H1 (cell line): ENCODE measurements at regions of chr16 and their contacts with region 1.

Region 1: GRCh38 chr16:24324421-24324820 is 68.3 kb downstream of the CACNG3 start:
- DNase-seq: no peak
- H3K4me3 ChIP-seq: no peak overlapping the region
- H3K27ac ChIP-seq: no peak overlapping the region
- H3K4me1 ChIP-seq: no peaks in the 10 kb centered on the region
- H3K27me3 ChIP-seq: no peaks in the 10 kb centered on the region; a peak in 1 of 7 replicates
- CTCF ChIP-seq: no peak
- EP300 ChIP-seq: no peak
- POLR2A ChIP-seq: no peak
- RAD21 ChIP-seq: no peak

Region 2: GRCh38 chr16:24297375-24297774 is 27.0 kb before region 1 on chr16:
- CTCF ChIA-PET with region 1: no interaction called
- POLR2A ChIA-PET with region 1: no interaction called
- DNase-seq: no peak
- H3K4me3 ChIP-seq: no peak overlapping the region
- H3K27ac ChIP-seq: no peak overlapping the region
- H3K4me1 ChIP-seq: no peaks in the 10 kb centered on the region
- H3K27me3 ChIP-seq: no peaks in the 10 kb centered on the region
- CTCF ChIP-seq: no peak
- EP300 ChIP-seq: no peak
- POLR2A ChIP-seq: no peak
- RAD21 ChIP-seq: no peak

Region 3: DNA sequence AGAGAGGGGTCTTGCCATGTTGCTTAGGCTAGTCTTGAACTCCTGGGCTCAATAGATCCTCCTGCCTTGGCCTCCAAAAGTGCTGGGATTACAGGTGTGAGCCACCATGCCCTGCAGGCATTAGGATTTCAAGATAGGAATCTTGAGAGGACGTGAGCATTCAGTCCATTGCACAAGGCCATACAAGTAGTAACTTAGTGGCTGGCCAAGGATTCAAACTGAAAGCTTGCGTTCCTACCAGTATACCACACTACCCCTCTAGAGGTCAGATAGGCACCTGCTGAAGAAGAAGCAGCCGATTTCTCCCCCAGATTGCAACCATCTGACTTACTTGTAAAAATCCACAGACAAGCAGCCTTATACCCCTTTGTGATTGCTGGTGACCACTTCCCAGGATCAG is 12.6 kb after region 1 on chr16:
- CTCF ChIA-PET with region 1: interaction called, 12 read pairs
- POLR2A ChIA-PET with region 1: interaction called, 3 read pairs
- DNase-seq: no peak
- H3K4me3 ChIP-seq: no peak overlapping the region
- H3K27ac ChIP-seq: no peak overlapping the region
- H3K4me1 ChIP-seq: no peaks in the 10 kb centered on the region
- H3K27me3 ChIP-seq: no peaks in the 10 kb centered on the region
- CTCF ChIP-seq: peak in 2 of 3 experiments; percentile 17 to 26; a peak in 2 of 4 replicates
- EP300 ChIP-seq: no peak
- POLR2A ChIP-seq: no peak
- RAD21 ChIP-seq: peak; percentile 40 to 60; a peak in 3 of 4 replicates